OCI-LY7 (cell line): ENCODE measurements at regions of chr15 and their contacts with region 1.

Region 1: GRCh38 chr15:52673312-52673711 is 5.9 kb downstream of the ATOSA start:
- DNase-seq: no peak
- H3K4me3 ChIP-seq: peak overlapping the region; percentile 20
- H3K27ac ChIP-seq: peak overlapping the region; percentile 10
- H3K4me1 ChIP-seq: peaks cover 46% of the 10 kb centered on the region
- CTCF ChIP-seq: no peak

Region 2: GRCh38 chr15:52609593-52609992 is 63.7 kb before region 1 on chr15:
- CTCF ChIA-PET with region 1: no interaction called
- POLR2A ChIA-PET with region 1: no interaction called
- intact Hi-C with region 1: loop called (anchors 5 kb)
- DNase-seq: no peak
- H3K4me3 ChIP-seq: no peak overlapping the region
- H3K27ac ChIP-seq: no peak overlapping the region
- H3K4me1 ChIP-seq: no peaks in the 10 kb centered on the region
- CTCF ChIP-seq: no peak

Region 3: DNA sequence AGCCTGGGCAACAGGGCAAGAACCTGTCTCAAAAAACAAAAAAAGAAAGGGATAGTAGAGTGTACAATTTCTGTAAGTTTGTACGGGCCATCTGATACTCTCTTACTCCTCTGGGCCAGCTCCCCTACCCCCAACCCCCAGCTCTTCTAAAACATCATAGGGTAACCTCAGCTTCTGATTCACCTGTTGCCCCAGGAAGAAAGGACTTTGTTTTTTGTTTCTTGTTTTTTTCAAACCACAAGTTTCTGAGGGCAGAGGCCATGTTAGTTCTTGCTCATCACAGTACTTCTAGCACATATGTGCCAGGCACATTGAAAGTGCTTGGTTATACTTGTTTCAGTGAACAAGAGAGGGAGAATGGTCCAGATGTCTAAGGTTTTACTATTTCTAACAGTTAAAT is 14.4 kb before region 1 on chr15:
- CTCF ChIA-PET with region 1: no interaction called
- POLR2A ChIA-PET with region 1: interaction called, 19 read pairs
- intact Hi-C with region 1: no loop called
- DNase-seq: no peak
- H3K4me3 ChIP-seq: no peak overlapping the region
- H3K27ac ChIP-seq: no peak overlapping the region
- H3K4me1 ChIP-seq: no peaks in the 10 kb centered on the region
- CTCF ChIP-seq: no peak